Aorta (tissue), 5 donors: ENCODE measurements at regions of chr6 and their contacts with region 1.

Region 1: GRCh38 chr6:24855395-24856245 is 56.9 kb upstream of the ARMH2 start:
- DNase-seq: peak in 1 of 2 donors; percentile 66
- ATAC-seq: peak; percentile 92
- H3K4me3 ChIP-seq: no peak overlapping the region
- H3K27ac ChIP-seq: no peak overlapping the region
- H3K4me1 ChIP-seq: no peaks in the 10 kb centered on the region
- H3K27me3 ChIP-seq: no peaks in the 10 kb centered on the region

Region 2: DNA sequence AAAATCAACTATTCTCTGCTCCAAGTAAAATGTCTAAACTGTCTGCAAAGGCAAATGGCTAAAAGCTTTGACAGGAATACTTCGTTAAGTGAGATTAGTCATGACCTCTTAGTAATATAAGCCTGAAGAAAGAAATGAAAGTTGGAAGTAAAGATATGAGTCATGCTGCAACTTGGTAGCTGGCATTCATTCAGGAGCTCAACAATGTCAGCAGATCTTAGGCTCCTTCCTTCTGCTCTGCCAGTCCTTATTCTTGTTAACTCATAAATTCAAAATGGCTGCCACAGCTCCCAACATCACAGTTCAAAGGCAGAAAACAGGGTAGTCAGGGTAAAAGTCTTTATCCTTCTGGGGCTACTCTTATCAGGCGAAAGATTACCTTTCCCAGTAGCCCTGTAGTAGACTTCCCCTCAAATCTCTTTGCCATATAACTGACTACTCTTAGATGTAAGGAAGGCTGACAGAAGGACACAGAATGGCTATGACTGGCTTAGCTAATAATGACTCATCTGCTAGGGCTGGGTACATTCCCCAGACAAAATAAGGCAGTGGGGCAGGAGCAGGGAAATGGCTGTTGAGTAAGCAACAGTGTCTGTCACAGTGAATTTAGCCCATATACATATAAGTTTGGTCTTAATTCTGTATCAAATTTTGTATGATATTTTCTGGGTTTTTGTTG is 112.2 kb before region 1 on chr6:
- intact Hi-C with region 1: no loop called
- DNase-seq: no peak
- ATAC-seq: no peak
- H3K4me3 ChIP-seq: no peak overlapping the region
- H3K27ac ChIP-seq: peak overlapping the region in 1 of 2 donors; percentile 51
- H3K4me1 ChIP-seq: no peaks in the 10 kb centered on the region
- H3K27me3 ChIP-seq: no peaks in the 10 kb centered on the region

Region 3: DNA sequence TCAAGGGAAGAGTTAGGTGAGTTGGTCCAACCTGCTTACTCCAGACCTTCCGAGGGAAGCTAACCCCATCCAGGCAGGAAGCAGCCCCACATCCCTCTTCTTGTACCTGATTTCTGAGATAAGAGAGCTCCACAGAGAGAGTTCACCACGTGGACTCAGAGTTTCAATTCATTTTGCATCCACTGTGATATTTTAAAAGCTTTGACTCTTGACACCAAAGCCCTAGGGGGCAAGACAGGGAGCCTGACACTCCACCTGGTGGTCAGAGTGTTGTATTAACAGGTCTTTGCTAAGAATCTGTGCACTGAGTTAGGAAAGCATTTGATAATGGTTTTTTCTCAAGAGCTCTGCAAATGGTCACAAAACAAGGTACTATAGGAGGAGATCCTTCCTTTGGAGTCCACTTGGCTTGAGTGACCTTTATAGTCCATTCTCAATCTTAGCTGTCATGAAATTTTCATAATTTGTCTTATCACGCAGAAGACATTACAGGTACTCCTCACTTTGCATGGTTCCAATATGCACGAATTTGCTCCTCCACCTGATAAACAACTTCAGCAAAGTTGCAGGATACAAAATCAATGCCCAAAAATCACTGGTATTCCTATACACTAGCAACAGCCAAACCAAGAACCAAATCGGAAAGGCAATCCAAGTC is 136.3 kb after region 1 on chr6:
- intact Hi-C with region 1: loop called (anchors 2 to 5 kb)
- DNase-seq: peak in 1 of 2 donors; percentile 55
- ATAC-seq: peak; percentile 87
- H3K4me3 ChIP-seq: no peak overlapping the region
- H3K27ac ChIP-seq: no peak overlapping the region
- H3K4me1 ChIP-seq: no peaks in the 10 kb centered on the region
- H3K27me3 ChIP-seq: no peaks in the 10 kb centered on the region

Region 4: GRCh38 chr6:25070547-25071366 is 215.1 kb after region 1 on chr6:
- intact Hi-C with region 1: loop called (anchors 2 kb)
- DNase-seq: peak; percentile 78 to 84
- ATAC-seq: peak; percentile 93
- H3K4me3 ChIP-seq: no peak overlapping the region
- H3K27ac ChIP-seq: no peak overlapping the region
- H3K4me1 ChIP-seq: no peaks in the 10 kb centered on the region
- H3K27me3 ChIP-seq: no peaks in the 10 kb centered on the region